ENCODE measurements at regions of chr5 and their contacts with region 1.

Region 1: DNA sequence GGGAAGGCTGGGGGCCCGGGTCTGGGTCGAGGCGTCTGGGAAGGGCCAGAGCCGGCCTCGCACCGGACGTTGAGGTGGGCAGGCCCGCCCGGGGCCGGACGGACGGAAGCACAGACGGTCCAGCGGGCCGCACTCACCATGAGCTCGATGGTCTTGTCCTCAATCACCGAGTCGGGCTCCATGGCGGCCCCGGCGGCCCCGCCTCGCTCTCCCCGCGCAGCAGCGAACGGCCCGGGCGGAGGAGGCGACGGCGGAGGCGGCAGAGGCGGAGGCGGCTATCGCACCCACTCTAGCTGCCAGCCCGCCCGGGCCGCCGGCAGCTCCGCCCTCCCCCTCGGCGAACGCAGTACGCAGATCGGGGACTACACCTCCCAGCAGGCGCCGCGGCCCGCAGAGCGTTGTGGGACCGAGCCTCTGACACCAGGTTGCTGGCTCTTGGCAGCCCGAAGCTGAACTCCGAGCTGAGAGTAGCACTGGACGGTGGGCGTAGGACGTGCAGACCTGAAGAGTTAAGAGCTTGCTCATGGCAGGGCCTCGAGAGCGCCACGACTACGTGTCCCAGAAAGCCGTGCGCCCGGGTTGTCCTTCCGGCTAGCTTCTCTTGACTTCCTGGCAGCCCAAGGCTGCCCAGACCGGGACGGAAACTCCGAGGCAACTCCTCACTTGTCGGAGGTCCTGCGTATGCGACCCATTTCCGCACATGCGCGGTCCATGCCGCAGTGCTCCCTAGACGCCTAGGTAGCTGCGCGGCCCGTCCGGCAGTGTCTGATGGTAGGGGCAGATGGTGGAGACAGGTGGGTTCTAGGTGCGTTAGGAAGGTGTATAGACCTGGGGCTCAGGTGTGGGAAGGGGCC is at the start of gene FBXW11:
- DNase-seq: peak; percentile 87 to 97
- H3K4me3 ChIP-seq: peak within 1 kb of the TSS; percentile 74 to 88
- H3K27ac ChIP-seq: peak within 1 kb of the TSS; percentile 97 to 99
- H3K4me1 ChIP-seq: peaks cover 6 to 37% of the 10 kb centered on the region in 2 donors
- H3K27me3 ChIP-seq: no peaks in the 10 kb centered on the region
- CTCF ChIP-seq: no peak
- total RNA-seq, gene FBXW11: 34.6 TPM

Region 2: DNA sequence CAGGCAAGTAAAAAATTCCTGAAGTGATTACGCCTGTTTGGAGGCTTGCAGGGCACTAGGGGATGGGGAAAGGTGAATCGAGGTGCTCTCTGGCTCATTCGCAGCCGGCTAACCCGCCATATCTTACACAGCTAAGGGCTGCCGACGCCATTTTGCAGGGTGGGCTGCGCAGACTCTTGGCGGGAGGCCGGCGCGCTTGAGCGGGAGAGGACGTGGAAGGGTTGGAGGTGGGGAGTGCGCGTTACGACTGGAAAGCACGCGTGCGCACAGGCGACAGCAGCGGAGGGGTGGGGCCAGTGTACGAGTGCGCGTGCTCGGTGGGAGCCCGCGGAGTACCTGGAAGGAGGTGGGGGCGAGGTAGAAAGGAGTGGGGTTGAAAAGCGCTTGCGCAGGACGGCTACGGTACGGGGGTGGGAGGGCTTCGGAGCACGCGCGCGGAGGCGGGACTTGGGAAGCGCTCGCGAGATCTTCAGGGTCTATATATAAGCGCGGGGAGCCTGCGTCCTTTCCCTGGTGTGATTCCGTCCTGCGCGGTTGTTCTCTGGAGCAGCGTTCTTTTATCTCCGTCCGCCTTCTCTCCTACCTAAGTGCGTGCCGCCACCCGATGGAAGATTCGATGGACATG is 619.1 kb before region 1 on chr5 and contains the start of gene NPM1:
- intact Hi-C with region 1: loop called (anchors 1 kb)
- DNase-seq: peak; percentile 78 to 97
- H3K4me3 ChIP-seq: peak within 1 kb of the TSS; percentile 68 to 94
- H3K27ac ChIP-seq: peak within 1 kb of the TSS; percentile 87 to 88
- H3K4me1 ChIP-seq: peaks cover 0 to 18% of the 10 kb centered on the region in 2 donors
- H3K27me3 ChIP-seq: no peaks in the 10 kb centered on the region
- CTCF ChIP-seq: no peak
- total RNA-seq, gene NPM1: 269 TPM

Region 3: GRCh38 chr5:171907725-171908343 is 98.7 kb before region 1 on chr5:
- intact Hi-C with region 1: loop called (anchors 1 kb)
- DNase-seq: no peak
- H3K4me3 ChIP-seq: no peak overlapping the region
- H3K27ac ChIP-seq: no peak overlapping the region
- H3K4me1 ChIP-seq: peaks cover 0 to 5% of the 10 kb centered on the region in 2 donors
- H3K27me3 ChIP-seq: no peaks in the 10 kb centered on the region
- CTCF ChIP-seq: peak; percentile 69 to 79 (median 73)

Region 4: DNA sequence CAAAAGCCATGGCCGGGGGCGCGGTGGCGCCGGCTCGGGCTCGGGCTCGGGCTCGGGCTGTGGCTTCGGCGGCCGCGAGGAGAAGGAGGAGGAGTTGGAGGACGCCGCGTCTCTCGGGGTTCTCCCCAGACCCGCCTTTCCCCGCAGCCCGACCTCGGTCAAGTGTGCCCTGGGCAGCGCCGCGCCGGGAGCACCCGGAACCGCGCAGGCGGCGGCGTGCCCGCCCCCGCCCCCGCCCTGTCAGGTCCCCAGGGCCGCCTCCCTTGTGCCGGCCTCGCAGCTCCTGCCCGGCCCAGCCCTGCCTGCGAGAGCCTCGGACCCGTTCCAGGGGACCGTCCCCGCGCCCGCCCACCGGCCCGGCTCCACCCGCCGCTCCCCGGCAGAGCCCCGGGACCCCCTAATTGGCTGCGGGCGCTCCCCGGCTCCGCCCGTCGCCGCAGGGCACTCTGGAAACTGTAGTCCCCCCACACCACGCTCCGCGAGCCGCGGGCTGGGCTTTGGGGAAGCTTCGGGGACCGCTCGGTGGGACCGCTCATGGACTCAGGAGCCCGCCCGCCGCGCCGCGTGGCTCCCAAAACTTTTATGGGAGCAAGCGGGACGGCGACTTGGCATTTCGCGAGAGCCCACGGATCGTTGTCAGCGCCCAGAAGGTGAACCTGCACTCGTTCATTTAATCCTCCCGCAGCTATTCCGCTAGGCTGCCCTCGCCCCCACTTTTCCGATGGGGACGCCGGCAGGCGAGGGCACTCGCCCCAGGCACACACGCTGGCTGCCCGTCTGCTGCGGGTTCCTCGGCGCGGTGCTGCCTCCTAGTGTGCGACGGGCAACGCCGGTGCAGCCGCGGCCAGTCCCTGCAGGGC is 181.7 kb after region 1 on chr5 and contains the start of gene STK10:
- intact Hi-C with region 1: loop called (anchors 1 kb)
- DNase-seq: peak; percentile 70 to 95
- H3K4me3 ChIP-seq: peak within 1 kb of the TSS; percentile 61 to 80
- H3K27ac ChIP-seq: peak within 1 kb of the TSS; percentile 86 to 88
- H3K4me1 ChIP-seq: peaks cover 0 to 8% of the 10 kb centered on the region in 2 donors
- H3K27me3 ChIP-seq: no peaks in the 10 kb centered on the region
- CTCF ChIP-seq: peak; percentile 91 to 94 (median 92)
- total RNA-seq, gene STK10: 18.4 TPM

Region 5: GRCh38 chr5:172697123-172698121 is 690.9 kb after region 1 on chr5:
- intact Hi-C with region 1: loop called (anchors 10 kb)
- DNase-seq: peak; percentile 46 to 94
- H3K4me3 ChIP-seq: peak overlapping the region; percentile 60 to 79
- H3K27ac ChIP-seq: peak overlapping the region; percentile 75 to 81
- H3K4me1 ChIP-seq: peaks cover 0 to 34% of the 10 kb centered on the region in 2 donors
- H3K27me3 ChIP-seq: no peaks in the 10 kb centered on the region
- CTCF ChIP-seq: peak; percentile 91 to 97 (median 91)

Measured in ascending aorta (tissue), 2 donors.